HepG2 (cell line): ENCODE measurements at regions of chr1 and their contacts with region 1.

Region 1: GRCh38 chr1:207876131-207876530 is 34.8 kb downstream of the CD34 start:
- DNase-seq: peak; percentile 12
- ATAC-seq: peak; percentile 93
- H3K4me3 ChIP-seq: no peak overlapping the region
- H3K27ac ChIP-seq: no peak overlapping the region
- H3K4me1 ChIP-seq: peaks cover 17% of the 10 kb centered on the region
- H3K27me3 ChIP-seq: peaks cover 0 to 20% of the 10 kb centered on the region in 2 experiments; a peak in 3 of 5 replicates
- CTCF ChIP-seq: peak; percentile 71
- EP300 ChIP-seq: no peak
- POLR2A ChIP-seq: no peak
- RAD21 ChIP-seq: 0 out of 2 replicates have a peak, but pooled peaks have one; percentile 28

Region 2: DNA sequence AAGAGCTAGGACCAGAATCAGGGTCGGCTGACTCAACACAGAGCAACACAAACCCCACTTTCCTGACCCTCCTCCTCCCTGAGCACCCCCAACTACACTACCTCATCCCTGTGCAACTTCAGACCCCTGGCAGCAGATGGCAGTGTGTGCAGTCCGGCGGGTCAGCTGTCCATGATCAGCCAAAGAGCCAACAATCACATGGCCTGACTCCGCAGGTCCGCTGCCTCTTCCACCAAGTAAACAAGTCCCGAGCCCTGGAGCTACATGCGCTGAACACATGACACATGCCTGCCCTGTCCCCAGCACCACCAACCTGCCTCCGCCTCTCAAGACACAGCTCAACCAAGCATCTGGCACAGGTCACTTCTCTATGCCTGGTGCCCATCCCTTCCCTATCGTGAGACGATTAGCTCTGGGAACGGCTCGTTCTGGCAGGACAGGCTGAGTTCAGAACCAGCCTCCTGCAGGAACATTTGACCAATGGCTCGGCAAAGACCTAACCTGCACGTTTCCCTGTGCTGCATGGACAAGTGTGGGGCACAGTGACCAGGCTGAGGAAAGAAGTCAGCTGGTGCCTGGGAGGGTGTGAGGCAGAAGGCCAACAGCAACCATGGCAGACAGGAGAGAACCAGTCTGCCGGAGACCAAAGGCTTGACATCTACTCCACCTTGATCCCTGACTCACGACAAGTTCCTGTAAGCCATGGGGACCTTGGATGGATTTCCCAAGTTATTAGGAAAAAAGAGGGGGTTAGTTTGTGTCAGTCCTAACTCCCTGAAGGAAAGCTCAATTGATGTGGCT is 64.0 kb before region 1 on chr1:
- CTCF ChIA-PET with region 1: interaction called, 6 read pairs
- POLR2A ChIA-PET with region 1: no interaction called
- in situ Hi-C with region 1: no loop called
- intact Hi-C with region 1: loop called (anchors 1 kb)
- DNase-seq: peak; percentile 64
- ATAC-seq: peak; percentile 94
- H3K4me3 ChIP-seq: no peak overlapping the region
- H3K27ac ChIP-seq: no peak overlapping the region
- H3K4me1 ChIP-seq: peaks cover 5% of the 10 kb centered on the region
- H3K27me3 ChIP-seq: no peaks in the 10 kb centered on the region
- CTCF ChIP-seq: peak; percentile 82
- EP300 ChIP-seq: no peak
- POLR2A ChIP-seq: no peak
- RAD21 ChIP-seq: peak; percentile 51; the same call in 1 of the 2 replicates